Activated CD4-positive, alpha-beta T cell treated with anti-CD3 and anti-CD28 coated beads, Interleukin-2, amount 10 ng/mL, durations not matched to agents 24 days and 14 days (primary cell): ENCODE measurements at regions of chr1 and their contacts with region 1.

Region 1: GRCh38 chr1:115706587-115707425 is 61.7 kb downstream of the CASQ2 start:
- DNase-seq: peak; percentile 68
- H3K4me3 Mint-ChIP-seq: no peak overlapping the region
- H3K27ac Mint-ChIP-seq: peak overlapping the region; percentile 45
- H3K4me1 Mint-ChIP-seq: no peaks in the 10 kb centered on the region
- H3K27me3 Mint-ChIP-seq: peaks cover 15% of the 10 kb centered on the region

Region 2: DNA sequence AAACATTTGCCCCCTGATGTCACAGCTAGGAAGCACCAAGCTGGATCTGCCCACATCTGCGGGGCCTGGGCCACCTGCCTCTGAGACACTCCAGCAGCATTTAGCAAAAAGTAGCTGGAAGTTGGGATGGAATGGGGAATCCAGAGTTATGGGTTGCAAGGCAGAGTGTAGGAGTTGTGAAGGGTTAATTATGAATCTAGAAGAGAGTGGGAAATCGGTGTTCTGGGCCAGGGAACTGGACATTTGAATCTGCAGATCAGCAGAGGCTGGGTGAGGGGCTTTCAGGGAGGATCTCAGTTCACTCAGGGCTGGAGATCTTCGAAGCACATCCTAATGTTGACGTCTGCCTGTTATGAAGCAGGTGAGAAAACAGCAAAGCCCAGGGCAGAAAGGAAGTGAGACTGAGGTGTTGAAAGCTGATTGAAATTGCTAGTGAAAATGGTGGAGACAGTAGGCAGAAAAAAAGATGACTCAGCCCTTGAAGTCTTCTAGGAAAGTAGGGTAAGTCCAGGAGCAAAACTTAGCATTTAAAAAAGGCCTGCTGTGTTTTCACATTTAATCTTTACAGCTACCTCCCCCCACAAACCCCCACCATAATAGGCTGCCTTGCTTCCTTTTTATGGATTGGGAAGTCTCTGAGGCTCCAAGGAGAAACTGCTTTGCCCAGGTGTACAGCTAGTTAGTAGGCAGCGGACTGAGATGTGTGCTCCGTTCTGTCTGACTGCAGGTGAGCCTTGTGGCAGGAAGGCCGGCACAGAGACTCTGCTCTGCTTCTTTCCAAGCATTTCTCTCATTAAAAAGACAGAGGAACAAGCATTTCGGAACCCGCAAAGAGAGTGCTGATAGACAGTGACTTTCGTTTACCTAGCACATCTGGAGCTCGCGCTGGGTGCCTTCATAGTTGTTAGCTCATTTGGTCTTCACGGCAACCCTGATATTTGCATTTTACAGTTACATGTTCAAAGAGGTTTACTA is 57.8 kb before region 1 on chr1:
- intact Hi-C with region 1: loop called (anchors 5 kb)
- DNase-seq: peak; percentile 77
- H3K4me3 Mint-ChIP-seq: no peak overlapping the region
- H3K27ac Mint-ChIP-seq: no peak overlapping the region
- H3K4me1 Mint-ChIP-seq: peaks cover 3% of the 10 kb centered on the region
- H3K27me3 Mint-ChIP-seq: peaks cover 2% of the 10 kb centered on the region